Astrocyte of the cerebellum (primary cell): ENCODE measurements at regions of chr14 and their contacts with region 1.

Region 1: GRCh38 chr14:95359994-95360826 is 40.5 kb upstream of the CLMN start:
- DNase-seq: peak; percentile 22
- H3K4me3 ChIP-seq: peak overlapping the region; percentile 2
- CTCF ChIP-seq: peak; percentile 2

Region 2: GRCh38 chr14:94879537-94879936 is 480.7 kb before region 1 on chr14:
- in situ Hi-C with region 1: loop called (anchors 10 kb)
- DNase-seq: no peak
- H3K4me3 ChIP-seq: no peak overlapping the region
- CTCF ChIP-seq: no peak

Region 3: GRCh38 chr14:95185033-95185766 is 175.0 kb before region 1 on chr14:
- in situ Hi-C with region 1: no loop called
- DNase-seq: no peak
- H3K4me3 ChIP-seq: no peak overlapping the region
- CTCF ChIP-seq: no peak

Region 4: GRCh38 chr14:95273001-95273978 is 86.9 kb before region 1 on chr14:
- in situ Hi-C with region 1: no loop called
- DNase-seq: no peak
- H3K4me3 ChIP-seq: no peak overlapping the region
- CTCF ChIP-seq: no peak